ENCODE measurements at regions of chr10 and their contacts with region 1.

Region 1: GRCh38 chr10:52883996-52884871 is 111.7 kb upstream of the MBL2 start:
- DNase-seq: peak; percentile 75 to 85
- H3K4me3 ChIP-seq: no peak overlapping the region
- H3K27ac ChIP-seq: peak overlapping the region; percentile 43
- H3K4me1 ChIP-seq: peaks cover 0 to 3% (median 0%) of the 10 kb centered on the region in 4 experiments; a peak in 1 of 7 replicates
- H3K27me3 ChIP-seq: no peaks in the 10 kb centered on the region
- CTCF ChIP-seq: peak in 2 of 3 experiments; percentile 64 to 82; a peak in 3 of 4 replicates
- EP300 ChIP-seq: no peak
- POLR2A ChIP-seq: no peak
- RAD21 ChIP-seq: peak; percentile 97

Region 2: GRCh38 chr10:52818019-52818418 is 66.2 kb before region 1 on chr10:
- CTCF ChIA-PET with region 1: interaction called, 12 read pairs
- POLR2A ChIA-PET with region 1: interaction called, 3 read pairs
- DNase-seq: peak in 1 of 2 experiments; percentile 39
- H3K4me3 ChIP-seq: no peak overlapping the region
- H3K27ac ChIP-seq: no peak overlapping the region
- H3K4me1 ChIP-seq: peaks cover 0 to 3% (median 1%) of the 10 kb centered on the region in 4 experiments; a peak in 2 of 7 replicates
- H3K27me3 ChIP-seq: no peaks in the 10 kb centered on the region
- CTCF ChIP-seq: peak in 2 of 3 experiments; percentile 58 to 77; a peak in 3 of 4 replicates
- EP300 ChIP-seq: no peak
- POLR2A ChIP-seq: no peak
- RAD21 ChIP-seq: peak; percentile 86 to 92

Region 3: DNA sequence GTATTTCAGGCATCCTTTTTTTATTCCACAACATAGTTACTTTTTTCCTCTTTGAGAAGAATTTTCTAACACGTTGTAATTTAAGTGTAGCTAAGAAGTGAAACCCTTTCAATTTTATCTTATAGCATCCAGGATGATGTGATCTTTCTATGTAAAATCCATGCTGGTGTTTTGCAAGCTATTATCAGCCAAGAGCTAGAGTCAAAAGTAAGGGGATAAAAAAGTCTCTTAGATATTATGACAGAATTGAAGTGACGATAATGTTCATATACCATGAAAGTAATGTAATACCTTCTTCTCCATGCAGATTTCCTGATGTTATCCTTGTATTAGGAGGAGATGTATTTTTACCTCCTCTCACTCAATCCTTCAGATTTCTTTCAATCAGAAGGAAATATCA is 47.4 kb before region 1 on chr10:
- CTCF ChIA-PET with region 1: no interaction called
- POLR2A ChIA-PET with region 1: no interaction called
- DNase-seq: no peak
- H3K4me3 ChIP-seq: no peak overlapping the region
- H3K27ac ChIP-seq: no peak overlapping the region
- H3K4me1 ChIP-seq: no peaks in the 10 kb centered on the region
- H3K27me3 ChIP-seq: no peaks in the 10 kb centered on the region
- CTCF ChIP-seq: no peak
- EP300 ChIP-seq: no peak
- POLR2A ChIP-seq: no peak
- RAD21 ChIP-seq: no peak

Region 4: DNA sequence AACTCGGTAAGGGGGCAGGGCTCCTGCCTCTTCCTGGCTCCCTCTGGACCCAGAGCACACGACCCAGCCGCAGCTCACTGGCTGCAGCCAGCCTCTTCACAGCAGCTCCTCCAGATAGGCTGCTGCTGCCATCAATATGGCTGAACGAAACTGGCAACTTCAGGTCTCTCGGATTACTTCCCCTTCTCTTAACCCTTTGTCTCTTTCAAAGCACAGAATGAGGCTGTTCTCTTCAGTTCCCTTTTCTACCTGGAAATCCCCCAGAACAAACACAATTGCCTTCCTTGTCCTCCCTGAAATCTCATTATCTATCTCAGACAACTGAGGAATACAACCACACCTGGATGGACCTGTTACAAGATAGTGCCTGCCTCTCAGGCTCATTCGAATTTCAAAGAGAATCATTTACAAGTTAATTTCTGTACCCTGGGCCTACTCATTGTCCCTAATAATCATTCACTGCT is 81.7 kb after region 1 on chr10:
- CTCF ChIA-PET with region 1: interaction called, 12 read pairs
- POLR2A ChIA-PET with region 1: interaction called, 3 read pairs
- DNase-seq: peak in 1 of 2 experiments; percentile 53
- H3K4me3 ChIP-seq: no peak overlapping the region
- H3K27ac ChIP-seq: peak overlapping the region; percentile 91
- H3K4me1 ChIP-seq: peaks cover 2 to 38% (median 9%) of the 10 kb centered on the region in 4 experiments; a peak in 5 of 7 replicates
- H3K27me3 ChIP-seq: no peaks in the 10 kb centered on the region
- CTCF ChIP-seq: no peak
- EP300 ChIP-seq: peak; percentile 32 to 94
- POLR2A ChIP-seq: peak in 1 of 2 experiments; percentile 34; a peak in 1 of 3 replicates
- RAD21 ChIP-seq: peak in 1 of 2 experiments; percentile 37; a peak in 2 of 4 replicates

Region 5: DNA sequence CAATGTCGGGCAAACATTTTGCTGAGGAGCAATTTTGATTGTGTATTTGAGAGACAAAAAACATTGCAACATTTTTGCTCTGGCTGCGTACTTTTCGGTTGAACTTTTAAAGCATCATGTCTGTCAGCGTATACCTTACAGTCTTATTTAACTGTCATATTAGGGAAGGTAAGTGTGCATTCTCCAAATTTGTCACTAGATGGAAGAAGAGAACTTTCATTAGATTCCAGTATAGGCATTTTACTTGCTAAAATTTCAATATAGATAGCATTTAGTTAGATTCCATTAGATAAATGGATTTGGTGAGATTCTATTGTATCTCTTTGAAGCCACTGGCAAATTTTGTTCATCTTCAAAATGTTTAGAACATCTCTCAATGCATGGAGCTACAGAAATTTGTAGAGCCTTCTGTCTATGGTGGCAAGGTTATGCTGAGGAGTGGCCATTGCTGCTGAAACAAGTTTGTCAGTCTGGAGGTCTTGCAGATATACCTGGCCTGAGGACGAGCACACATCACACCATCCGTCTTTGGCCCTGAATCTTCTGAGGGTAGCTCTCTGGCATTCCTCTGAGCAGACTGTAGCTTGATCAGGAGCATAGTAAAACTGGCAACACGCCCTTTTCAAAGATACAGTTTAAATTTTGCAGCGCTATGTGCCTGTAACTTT is 325.8 kb after region 1 on chr10:
- CTCF ChIA-PET with region 1: interaction called, 22 read pairs
- POLR2A ChIA-PET with region 1: no interaction called
- DNase-seq: peak in 1 of 2 experiments; percentile 9
- H3K4me3 ChIP-seq: no peak overlapping the region
- H3K27ac ChIP-seq: no peak overlapping the region; the same call in 1 of the 2 replicates
- H3K4me1 ChIP-seq: peaks cover 0 to 3% (median 0%) of the 10 kb centered on the region in 4 experiments; a peak in 2 of 7 replicates
- H3K27me3 ChIP-seq: no peaks in the 10 kb centered on the region
- CTCF ChIP-seq: peak in 1 of 3 experiments; percentile 56; a peak in 2 of 4 replicates
- EP300 ChIP-seq: no peak
- POLR2A ChIP-seq: no peak
- RAD21 ChIP-seq: peak; percentile 59 to 79